ENCODE measurements at regions of chr15 and their contacts with region 1.

Region 1: GRCh38 chr15:66921319-66921915 is 144.0 kb upstream of the SMAD3 start:
- DNase-seq: peak; percentile 40 to 89 (median 83)
- H3K4me3 ChIP-seq: no peak overlapping the region
- H3K27ac ChIP-seq: no peak overlapping the region
- H3K4me1 ChIP-seq: peaks cover 0 to 25% (median 11%) of the 10 kb centered on the region in 4 experiments
- H3K27me3 ChIP-seq: no peaks in the 10 kb centered on the region

Region 2: GRCh38 chr15:66907826-66908743 is 13.3 kb before region 1 on chr15:
- CTCF ChIA-PET with region 1: interaction called, 14 read pairs
- POLR2A ChIA-PET with region 1: no interaction called
- DNase-seq: peak; percentile 71 to 96 (median 94)
- H3K4me3 ChIP-seq: peak overlapping the region in 2 of 7 experiments; percentile 21 to 32
- H3K27ac ChIP-seq: peak overlapping the region in 1 of 2 experiments; percentile 36
- H3K4me1 ChIP-seq: peaks cover 2 to 58% (median 29%) of the 10 kb centered on the region in 4 experiments
- H3K27me3 ChIP-seq: no peaks in the 10 kb centered on the region